ENCODE measurements at regions of chr15 and their contacts with region 1.

Region 1: GRCh38 chr15:76994971-76995945 is at the start of gene PSTPIP1:
- DNase-seq: peak; percentile 84
- H3K4me3 Mint-ChIP-seq: peak within 1 kb of the TSS; percentile 92
- H3K27ac Mint-ChIP-seq: peak within 1 kb of the TSS; percentile 98
- H3K4me1 Mint-ChIP-seq: peaks cover 78% of the 10 kb centered on the region
- H3K27me3 Mint-ChIP-seq: no peaks in the 10 kb centered on the region
- total RNA-seq, gene PSTPIP1: 181 to 187 TPM

Region 2: DNA sequence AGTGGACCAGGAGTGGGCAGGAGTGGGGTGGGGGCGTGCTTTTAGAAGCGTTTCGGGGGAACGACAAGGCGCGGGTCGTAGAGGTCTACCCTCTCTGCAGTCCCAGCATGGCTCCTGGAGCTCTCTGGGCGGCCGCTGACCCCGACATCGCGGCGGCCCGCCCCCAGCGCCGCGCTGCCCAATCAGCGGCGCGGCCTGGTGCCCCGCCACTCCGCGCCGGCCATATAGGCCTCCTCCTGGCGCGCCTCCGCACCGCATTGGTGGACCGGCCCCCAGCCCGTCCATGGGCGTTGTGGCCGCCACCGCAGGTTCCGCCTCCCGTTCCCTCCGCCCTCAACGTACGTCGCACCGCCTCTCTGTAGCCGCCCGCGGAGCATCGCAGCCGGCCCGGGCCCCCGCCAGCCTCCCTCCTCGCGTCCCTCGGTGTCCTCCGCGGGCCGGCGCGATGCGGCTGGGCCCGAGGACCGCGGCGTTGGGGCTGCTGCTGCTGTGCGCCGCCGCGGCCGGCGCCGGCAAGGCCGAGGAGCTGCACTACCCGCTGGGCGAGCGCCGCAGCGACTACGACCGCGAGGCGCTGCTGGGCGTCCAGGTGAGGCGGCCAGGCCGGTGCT is 63.8 kb before region 1 on chr15 and contains the start of gene RCN2:
- CTCF ChIA-PET with region 1: no interaction called
- POLR2A ChIA-PET with region 1: interaction called, 12 read pairs
- DNase-seq: peak; percentile 95
- H3K4me3 Mint-ChIP-seq: peak within 1 kb of the TSS; percentile 82
- H3K27ac Mint-ChIP-seq: peak within 1 kb of the TSS; percentile 71
- H3K4me1 Mint-ChIP-seq: peaks cover 35% of the 10 kb centered on the region
- H3K27me3 Mint-ChIP-seq: no peaks in the 10 kb centered on the region
- total RNA-seq, gene RCN2: 23.0 to 24.9 TPM

Region 3: GRCh38 chr15:76973362-76973743 is 21.9 kb before region 1 on chr15:
- CTCF ChIA-PET with region 1: interaction called, 20 read pairs
- POLR2A ChIA-PET with region 1: interaction called, 107 read pairs
- DNase-seq: peak; percentile 71
- H3K4me3 Mint-ChIP-seq: no peak overlapping the region
- H3K27ac Mint-ChIP-seq: no peak overlapping the region
- H3K4me1 Mint-ChIP-seq: peaks cover 25% of the 10 kb centered on the region
- H3K27me3 Mint-ChIP-seq: peaks cover 1% of the 10 kb centered on the region

Region 4: GRCh38 chr15:77024271-77025082 is 29.2 kb after region 1 on chr15:
- CTCF ChIA-PET with region 1: interaction called, 13 read pairs
- POLR2A ChIA-PET with region 1: interaction called, 188 read pairs
- DNase-seq: peak; percentile 66
- H3K4me3 Mint-ChIP-seq: no peak overlapping the region
- H3K27ac Mint-ChIP-seq: peak overlapping the region; percentile 70
- H3K4me1 Mint-ChIP-seq: peaks cover 57% of the 10 kb centered on the region
- H3K27me3 Mint-ChIP-seq: no peaks in the 10 kb centered on the region

Region 5: DNA sequence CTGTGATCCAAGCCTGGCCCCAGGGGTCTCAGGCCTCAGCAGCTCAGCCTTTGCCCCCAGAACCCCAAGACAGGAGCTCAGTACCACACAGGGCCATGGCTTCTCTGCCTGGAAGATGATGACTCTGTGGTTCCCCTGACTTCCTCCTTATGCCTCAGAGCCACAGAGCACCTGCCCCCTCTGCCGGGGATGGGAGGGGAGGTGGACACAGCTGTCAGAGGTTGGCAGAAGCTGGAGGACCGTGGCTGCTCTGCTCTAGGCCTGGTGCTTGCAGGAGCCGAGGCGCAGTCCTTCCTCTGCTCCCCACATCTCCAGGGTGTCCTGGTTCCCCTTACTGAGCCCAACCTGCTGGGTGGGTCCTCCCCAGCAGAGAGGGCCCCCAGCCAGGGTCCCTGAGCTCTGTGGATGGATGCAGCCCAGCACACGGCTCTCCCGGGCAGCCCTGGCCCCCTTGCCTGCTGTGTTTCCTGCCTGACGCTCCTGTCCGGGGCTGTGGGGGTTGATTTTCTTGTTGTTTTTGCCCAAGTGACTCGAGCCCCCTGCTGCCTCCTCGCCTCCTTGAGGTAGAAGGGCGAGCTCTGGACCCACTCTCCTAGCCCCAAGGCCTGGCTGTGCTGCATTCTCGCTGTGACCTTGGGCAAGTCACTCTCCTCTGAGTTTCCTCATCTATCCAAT is 36.3 kb after region 1 on chr15:
- CTCF ChIA-PET with region 1: no interaction called
- POLR2A ChIA-PET with region 1: interaction called, 18 read pairs
- DNase-seq: peak; percentile 37
- H3K4me3 Mint-ChIP-seq: no peak overlapping the region
- H3K27ac Mint-ChIP-seq: peak overlapping the region; percentile 52
- H3K4me1 Mint-ChIP-seq: peaks cover 7% of the 10 kb centered on the region
- H3K27me3 Mint-ChIP-seq: no peaks in the 10 kb centered on the region

Region 6: DNA sequence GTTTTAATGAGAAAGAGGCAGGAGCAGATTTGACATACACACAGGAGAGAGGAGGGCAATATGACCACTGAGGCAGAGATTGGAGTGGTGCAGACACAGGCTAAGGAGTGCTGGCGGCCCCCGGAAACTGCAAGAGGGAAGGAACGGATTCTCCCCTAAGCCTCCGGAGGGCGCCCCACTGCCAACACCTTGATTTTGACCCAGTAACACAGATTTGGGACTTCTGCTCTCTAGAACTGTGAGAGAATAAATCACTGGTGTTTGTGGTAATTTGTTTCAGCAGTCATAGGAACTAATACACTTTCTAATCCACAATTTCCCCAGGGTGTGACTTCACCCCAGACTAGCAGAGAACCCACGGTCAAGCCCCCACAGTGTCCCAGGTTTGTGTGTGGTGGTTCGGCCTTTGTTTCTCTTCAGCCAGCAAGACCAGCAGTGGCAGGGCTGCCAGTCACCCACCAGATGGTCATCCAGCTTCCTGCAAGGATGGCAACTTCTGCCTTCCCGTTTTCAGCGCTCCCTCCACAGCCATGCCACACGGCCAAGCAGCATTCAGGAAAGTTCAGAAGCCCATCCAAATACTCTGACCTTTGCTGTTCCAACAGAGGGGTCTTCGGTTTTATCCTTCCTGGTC is 99.3 kb after region 1 on chr15:
- CTCF ChIA-PET with region 1: no interaction called
- POLR2A ChIA-PET with region 1: no interaction called
- DNase-seq: no peak
- H3K4me3 Mint-ChIP-seq: no peak overlapping the region
- H3K27ac Mint-ChIP-seq: no peak overlapping the region
- H3K4me1 Mint-ChIP-seq: no peaks in the 10 kb centered on the region
- H3K27me3 Mint-ChIP-seq: peaks cover 2% of the 10 kb centered on the region